ENCODE measurements at regions of chr4 and their contacts with region 1.

Region 1: GRCh38 chr4:75673027-75673958 is at the start of gene G3BP2:
- DNase-seq: peak; percentile 91 to 93
- H3K4me3 ChIP-seq: peak within 1 kb of the TSS; percentile 96
- H3K27ac ChIP-seq: peak within 1 kb of the TSS; percentile 84
- H3K4me1 ChIP-seq: peaks cover 17% of the 10 kb centered on the region
- H3K27me3 ChIP-seq: no peaks in the 10 kb centered on the region
- CTCF ChIP-seq: no peak
- total RNA-seq, gene G3BP2: 102 and 105 TPM in 2 replicates

Region 2: DNA sequence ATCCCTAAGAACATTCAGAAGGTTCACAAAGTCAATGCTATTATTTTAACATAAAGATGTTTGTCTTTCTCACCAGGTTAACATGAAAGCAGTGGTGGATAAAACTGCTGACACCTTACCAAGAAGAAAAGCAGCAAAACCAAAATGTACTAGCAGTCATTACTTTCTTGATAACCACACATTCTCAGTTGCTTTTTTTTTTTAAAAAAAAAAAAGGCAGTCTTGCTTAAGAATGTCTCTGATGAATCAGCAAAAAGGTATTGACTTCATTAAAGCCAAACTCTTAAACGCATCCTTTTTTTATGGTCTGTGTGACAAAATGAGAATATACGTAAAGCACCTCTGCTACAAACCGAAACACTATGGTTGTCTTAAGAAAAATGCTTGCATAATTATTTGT is 74.9 kb before region 1 on chr4:
- CTCF ChIA-PET with region 1: no interaction called
- POLR2A ChIA-PET with region 1: no interaction called
- intact Hi-C with region 1: no loop called
- DNase-seq: peak in 1 of 2 experiments; percentile 48
- H3K4me3 ChIP-seq: no peak overlapping the region
- H3K27ac ChIP-seq: no peak overlapping the region
- H3K4me1 ChIP-seq: no peaks in the 10 kb centered on the region
- H3K27me3 ChIP-seq: no peaks in the 10 kb centered on the region
- CTCF ChIP-seq: no peak

Region 3: DNA sequence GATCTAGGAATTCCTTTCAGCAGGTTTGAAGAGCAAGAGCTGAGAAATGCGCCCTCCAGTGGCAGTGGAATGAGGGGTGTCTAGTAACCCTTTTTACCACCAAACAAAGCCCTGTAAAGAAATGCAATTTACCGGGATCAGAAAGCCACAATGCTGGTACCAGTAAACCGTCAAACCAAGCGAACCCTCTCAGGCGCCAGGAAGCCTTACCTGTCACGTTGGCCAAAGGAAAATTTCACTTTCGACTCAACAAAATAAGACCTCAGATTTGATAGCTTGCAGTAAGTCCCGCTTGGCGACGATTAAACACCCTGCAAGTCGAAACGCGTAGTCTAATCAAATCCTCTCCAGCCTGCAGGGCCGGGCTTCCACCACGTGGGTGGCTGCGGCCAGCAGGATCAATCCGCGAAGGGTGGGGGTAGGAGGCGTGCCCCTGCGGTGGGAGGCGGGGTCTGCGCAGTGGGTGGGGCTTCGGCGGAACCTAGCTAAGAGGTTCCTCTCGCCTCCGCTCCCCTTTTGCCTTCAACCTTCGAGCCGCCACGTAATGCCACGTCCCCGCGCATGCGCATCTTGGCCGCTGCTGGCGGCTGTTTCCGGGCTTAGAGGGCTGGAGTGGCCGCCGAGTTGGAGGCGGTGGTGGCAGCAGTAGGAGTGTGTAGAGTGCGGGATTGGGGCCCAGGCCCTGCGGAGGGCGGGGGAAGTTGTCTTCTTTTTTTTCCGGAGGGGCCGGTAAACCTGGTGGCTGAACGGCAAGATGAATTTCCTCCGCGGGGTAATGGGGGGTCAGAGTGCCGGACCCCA is 51.0 kb after region 1 on chr4 and contains the start of gene USO1:
- CTCF ChIA-PET with region 1: interaction called, 4 read pairs
- POLR2A ChIA-PET with region 1: interaction called, 3 read pairs
- intact Hi-C with region 1: loop called (anchors 1 kb)
- DNase-seq: peak; percentile 89 to 97
- H3K4me3 ChIP-seq: peak within 1 kb of the TSS; percentile 69
- H3K27ac ChIP-seq: peak within 1 kb of the TSS; percentile 88
- H3K4me1 ChIP-seq: peaks cover 38% of the 10 kb centered on the region
- H3K27me3 ChIP-seq: no peaks in the 10 kb centered on the region
- CTCF ChIP-seq: peak; percentile 79
- total RNA-seq, gene USO1: 26.5 and 33.9 TPM in 2 replicates